ENCODE measurements at regions of chr15 and their contacts with region 1.

Region 1: DNA sequence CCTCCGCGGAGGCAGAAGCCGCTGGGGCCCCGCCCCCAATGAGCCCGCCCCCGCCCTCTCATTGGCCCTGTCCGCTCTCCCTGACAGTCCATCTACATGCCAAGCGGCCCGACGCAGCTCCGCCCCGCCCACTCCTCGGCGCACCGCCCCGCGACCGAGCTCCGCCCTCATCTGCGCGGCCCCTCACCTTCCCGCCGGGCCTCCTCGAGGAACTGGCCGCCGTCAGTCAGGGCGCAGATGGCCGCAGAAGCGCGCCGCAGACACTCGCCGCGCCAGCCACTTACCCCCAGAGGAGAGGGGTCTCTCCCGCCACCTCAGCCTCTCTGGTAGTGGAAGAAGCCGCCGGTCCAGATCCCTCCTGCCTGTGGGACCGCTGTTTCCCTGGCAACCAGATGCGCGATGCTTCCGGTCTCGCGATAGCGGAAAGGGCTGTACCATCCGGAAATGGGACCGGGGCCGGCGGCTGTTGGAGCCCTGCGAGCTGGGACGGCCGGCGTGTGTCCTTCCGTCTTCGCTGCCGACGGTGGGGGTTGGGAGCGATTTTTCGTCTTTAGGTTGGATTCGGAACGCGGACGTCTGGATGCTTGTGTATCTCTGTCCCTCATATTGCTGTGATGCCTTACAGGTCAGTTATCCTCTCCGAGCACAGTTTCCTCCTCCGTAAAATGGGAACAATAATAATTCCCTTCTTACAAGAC is at the start of gene FSIP1:
- DNase-seq: peak; percentile 98
- ATAC-seq: peak; percentile 99
- H3K4me3 Mint-ChIP-seq: peak within 1 kb of the TSS; percentile 78
- H3K27ac Mint-ChIP-seq: peak within 1 kb of the TSS; percentile 94
- H3K4me1 Mint-ChIP-seq: peaks cover 44% of the 10 kb centered on the region
- H3K27me3 Mint-ChIP-seq: no peaks in the 10 kb centered on the region
- CTCF ChIP-seq: no peak
- total RNA-seq, gene FSIP1: 0.36 to 0.43 TPM

Region 2: GRCh38 chr15:39874890-39875549 is 92.4 kb after region 1 on chr15:
- CTCF ChIA-PET with region 1: interaction called, 18 read pairs
- POLR2A ChIA-PET with region 1: no interaction called
- intact Hi-C with region 1: loop called (anchors 5 kb)
- DNase-seq: peak; percentile 45
- ATAC-seq: no peak
- H3K4me3 Mint-ChIP-seq: no peak overlapping the region
- H3K27ac Mint-ChIP-seq: no peak overlapping the region
- H3K4me1 Mint-ChIP-seq: no peaks in the 10 kb centered on the region
- H3K27me3 Mint-ChIP-seq: peaks cover 3% of the 10 kb centered on the region
- CTCF ChIP-seq: peak; percentile 69

Region 3: DNA sequence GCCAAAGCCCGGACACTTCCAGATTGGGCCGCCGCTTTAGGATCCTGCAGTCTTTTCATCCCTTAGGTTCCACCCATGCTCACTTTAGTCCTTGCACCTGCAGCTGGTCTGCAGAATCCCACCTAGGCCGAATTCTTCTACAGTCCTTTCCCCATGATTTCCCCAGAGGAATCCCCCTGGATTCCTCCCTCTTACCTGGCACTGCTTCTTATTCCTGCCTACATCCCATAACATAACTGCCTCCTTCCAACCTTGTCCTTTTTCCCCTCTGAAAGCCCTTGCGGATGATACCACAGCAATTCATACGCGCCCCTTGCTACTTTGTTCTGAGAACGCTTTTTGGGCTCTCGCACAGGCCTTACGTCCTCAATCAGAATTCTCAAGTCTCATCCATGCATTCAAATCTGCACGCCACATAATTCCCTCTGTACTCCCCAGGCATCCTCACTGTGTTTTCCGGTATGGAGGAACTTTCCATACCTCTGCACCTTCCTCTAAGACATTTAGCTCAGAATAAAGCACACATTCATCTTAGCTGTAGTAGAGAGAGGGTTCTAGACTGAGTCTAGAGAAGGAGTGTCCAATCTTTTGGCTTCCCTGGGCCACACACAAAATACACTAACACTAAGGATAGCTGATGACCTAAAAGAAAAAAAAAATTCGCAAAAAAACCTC is 151.9 kb after region 1 on chr15:
- CTCF ChIA-PET with region 1: interaction called, 4 read pairs
- POLR2A ChIA-PET with region 1: no interaction called
- intact Hi-C with region 1: loop called (anchors 5 kb)
- DNase-seq: peak; percentile 11
- ATAC-seq: no peak
- H3K4me3 Mint-ChIP-seq: peak overlapping the region; percentile 82
- H3K27ac Mint-ChIP-seq: peak overlapping the region; percentile 74
- H3K4me1 Mint-ChIP-seq: peaks cover 25% of the 10 kb centered on the region
- H3K27me3 Mint-ChIP-seq: peaks cover 6% of the 10 kb centered on the region
- CTCF ChIP-seq: no peak

Region 4: GRCh38 chr15:40038638-40039543 is 256.3 kb after region 1 on chr15 and contains the start of gene SRP14:
- CTCF ChIA-PET with region 1: interaction called, 6 read pairs
- POLR2A ChIA-PET with region 1: no interaction called
- intact Hi-C with region 1: loop called (anchors 10 kb)
- DNase-seq: peak; percentile 97
- ATAC-seq: peak; percentile 95
- H3K4me3 Mint-ChIP-seq: peak within 1 kb of the TSS; percentile 99
- H3K27ac Mint-ChIP-seq: peak within 1 kb of the TSS; percentile 94
- H3K4me1 Mint-ChIP-seq: peaks cover 54% of the 10 kb centered on the region
- H3K27me3 Mint-ChIP-seq: no peaks in the 10 kb centered on the region
- CTCF ChIP-seq: no peak
- total RNA-seq, gene SRP14: 147 to 152 TPM